ENCODE measurements at regions of chr16 and their contacts with region 1.

Region 1: GRCh38 chr16:9008601-9009260 is 45.0 kb upstream of the USP7 start:
- DNase-seq: no peak
- ATAC-seq: peak; percentile 99
- H3K4me3 ChIP-seq: 0 out of 4 replicates have a peak overlapping the region, but pooled peaks of 1 of the 2 experiments have one; percentile 27
- H3K27ac ChIP-seq: no peak overlapping the region
- H3K4me1 ChIP-seq: peaks cover 4 to 9% of the 10 kb centered on the region in 2 experiments; a peak in 3 of 4 replicates
- H3K27me3 ChIP-seq: no peaks in the 10 kb centered on the region
- CTCF ChIP-seq: peak; percentile 75 to 87 (median 86)
- POLR2A ChIP-seq: no peak
- RAD21 ChIP-seq: peak; percentile 86

Region 2: DNA sequence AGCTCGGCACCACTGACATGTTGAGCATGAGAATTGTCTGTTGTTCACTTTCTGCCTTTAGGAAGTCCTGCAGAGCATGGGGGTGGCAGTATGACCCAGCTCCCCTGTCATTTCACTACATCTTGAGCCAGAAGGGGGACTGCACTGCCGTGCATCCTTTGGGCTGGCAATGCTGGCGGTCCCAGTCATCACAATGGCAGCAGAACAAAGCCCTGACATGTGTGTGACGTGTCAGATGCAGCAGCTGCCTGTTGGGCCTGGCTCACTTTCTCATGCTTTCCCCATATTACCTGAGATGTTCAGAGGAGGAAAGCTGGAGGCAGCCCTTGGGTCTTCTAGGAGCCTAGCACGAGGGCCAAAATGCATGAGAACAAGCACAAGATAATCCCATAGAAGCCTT is 340.6 kb before region 1 on chr16:
- CTCF ChIA-PET with region 1: no interaction called
- POLR2A ChIA-PET with region 1: no interaction called
- RAD21 ChIA-PET with region 1: no interaction called
- intact Hi-C with region 1: no loop called
- DNase-seq: no peak
- ATAC-seq: no peak
- H3K4me3 ChIP-seq: no peak overlapping the region
- H3K27ac ChIP-seq: no peak overlapping the region
- H3K4me1 ChIP-seq: no peaks in the 10 kb centered on the region
- H3K27me3 ChIP-seq: no peaks in the 10 kb centered on the region
- CTCF ChIP-seq: no peak
- POLR2A ChIP-seq: no peak
- RAD21 ChIP-seq: no peak

Region 3: GRCh38 chr16:8905168-8905762 is 103.5 kb before region 1 on chr16:
- CTCF ChIA-PET with region 1: interaction called, 3 read pairs
- POLR2A ChIA-PET with region 1: no interaction called
- RAD21 ChIA-PET with region 1: interaction called, 3 to 4 read pairs
- intact Hi-C with region 1: loop called (anchors 2 kb)
- DNase-seq: peak; percentile 19
- ATAC-seq: peak; percentile 90
- H3K4me3 ChIP-seq: no peak overlapping the region
- H3K27ac ChIP-seq: no peak overlapping the region
- H3K4me1 ChIP-seq: no peaks in the 10 kb centered on the region
- H3K27me3 ChIP-seq: no peaks in the 10 kb centered on the region
- CTCF ChIP-seq: peak; percentile 51 to 56 (median 52)
- POLR2A ChIP-seq: no peak
- RAD21 ChIP-seq: peak; percentile 70

Region 4: GRCh38 chr16:8998114-8998513 is 10.6 kb before region 1 on chr16:
- CTCF ChIA-PET with region 1: interaction called, 14 read pairs
- POLR2A ChIA-PET with region 1: no interaction called
- RAD21 ChIA-PET with region 1: no interaction called
- intact Hi-C with region 1: no loop called
- DNase-seq: no peak
- ATAC-seq: no peak
- H3K4me3 ChIP-seq: no peak overlapping the region
- H3K27ac ChIP-seq: no peak overlapping the region
- H3K4me1 ChIP-seq: no peaks in the 10 kb centered on the region
- H3K27me3 ChIP-seq: no peaks in the 10 kb centered on the region
- CTCF ChIP-seq: no peak
- POLR2A ChIP-seq: no peak
- RAD21 ChIP-seq: no peak

Region 5: DNA sequence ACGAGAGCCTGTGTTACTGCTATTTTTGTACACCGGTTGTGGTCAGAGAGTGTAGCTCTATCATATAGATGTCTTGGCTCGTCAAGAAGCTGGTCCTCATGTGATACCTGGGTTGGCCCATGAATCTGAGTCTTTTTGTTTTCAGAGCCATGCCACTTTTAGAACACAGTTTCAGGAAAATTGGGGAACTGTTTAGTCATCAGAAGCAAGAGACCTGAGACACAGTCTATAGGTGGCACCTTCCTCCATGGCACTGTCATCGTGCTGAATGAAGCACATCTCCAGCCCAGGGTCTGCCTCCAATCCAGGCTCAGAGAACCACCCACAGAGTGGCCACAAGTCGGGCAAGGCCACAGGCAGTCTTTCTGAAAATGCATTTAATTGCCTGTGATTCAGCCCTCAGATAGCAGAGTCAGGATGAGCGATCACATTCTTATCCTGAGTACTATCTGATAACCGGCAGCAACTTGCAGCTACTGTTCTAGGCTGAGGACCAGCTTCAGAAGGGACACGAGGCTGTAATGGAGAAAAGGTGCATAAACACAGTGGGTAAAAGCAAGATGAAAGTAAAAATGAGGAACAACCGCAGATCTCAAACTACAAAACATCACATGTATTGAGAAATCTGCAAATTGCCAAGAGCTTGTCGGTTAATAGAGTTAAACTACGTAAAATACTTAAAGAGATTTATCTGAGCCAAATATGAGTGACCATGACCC is 68.5 kb after region 1 on chr16:
- CTCF ChIA-PET with region 1: interaction called, 3 read pairs
- POLR2A ChIA-PET with region 1: interaction called, 10 read pairs
- RAD21 ChIA-PET with region 1: no interaction called
- intact Hi-C with region 1: no loop called
- DNase-seq: peak; percentile 47
- ATAC-seq: peak; percentile 63
- H3K4me3 ChIP-seq: peak overlapping the region in 1 of 2 experiments; percentile 12; a peak in 1 of 4 replicates
- H3K27ac ChIP-seq: peak overlapping the region; percentile 74
- H3K4me1 ChIP-seq: peaks cover 33 to 74% of the 10 kb centered on the region in 2 experiments
- H3K27me3 ChIP-seq: no peaks in the 10 kb centered on the region
- CTCF ChIP-seq: no peak
- POLR2A ChIP-seq: no peak
- RAD21 ChIP-seq: 0 out of 2 replicates have a peak, but pooled peaks have one; percentile 35